Breast epithelium (tissue), 4 donors: ENCODE measurements at regions of chr11 and their contacts with region 1.

Region 1: GRCh38 chr11:65418711-65419459 is 3.7 kb upstream of the NEAT1 start:
- DNase-seq: peak; percentile 97
- H3K4me3 ChIP-seq: peak overlapping the region; percentile 93 to 96 (median 95)
- H3K27ac ChIP-seq: peak overlapping the region; percentile 100
- H3K4me1 ChIP-seq: peaks cover 26 to 30% of the 10 kb centered on the region in 2 donors
- H3K27me3 ChIP-seq: no peaks in the 10 kb centered on the region
- CTCF ChIP-seq: no peak
- POLR2A ChIP-seq: no peak

Region 2: GRCh38 chr11:65382033-65382807 is 36.7 kb before region 1 on chr11 and contains the start of gene SLC25A45:
- intact Hi-C with region 1: loop called (anchors 5 kb)
- DNase-seq: peak; percentile 92 to 95
- H3K4me3 ChIP-seq: peak within 1 kb of the TSS; percentile 42 to 68 (median 53)
- H3K27ac ChIP-seq: peak within 1 kb of the TSS; percentile 98 to 99
- H3K4me1 ChIP-seq: peaks cover 0 to 20% of the 10 kb centered on the region in 2 donors
- H3K27me3 ChIP-seq: no peaks in the 10 kb centered on the region
- CTCF ChIP-seq: peak; percentile 93 to 97 (median 95)
- POLR2A ChIP-seq: peak; percentile 22
- total RNA-seq, gene SLC25A45: 5.4 to 9.1 (median 6.6) TPM

Region 3: GRCh38 chr11:65477149-65477965 is 58.5 kb after region 1 on chr11:
- intact Hi-C with region 1: loop called (anchors 1 kb)
- DNase-seq: peak; percentile 97 to 98
- H3K4me3 ChIP-seq: peak overlapping the region; percentile 58 to 81 (median 80)
- H3K27ac ChIP-seq: peak overlapping the region; percentile 99 to 100
- H3K4me1 ChIP-seq: peaks cover 5 to 6% of the 10 kb centered on the region in 2 donors
- H3K27me3 ChIP-seq: no peaks in the 10 kb centered on the region
- CTCF ChIP-seq: peak in 1 of 3 donors; percentile 23
- POLR2A ChIP-seq: peak; percentile 84

Region 4: DNA sequence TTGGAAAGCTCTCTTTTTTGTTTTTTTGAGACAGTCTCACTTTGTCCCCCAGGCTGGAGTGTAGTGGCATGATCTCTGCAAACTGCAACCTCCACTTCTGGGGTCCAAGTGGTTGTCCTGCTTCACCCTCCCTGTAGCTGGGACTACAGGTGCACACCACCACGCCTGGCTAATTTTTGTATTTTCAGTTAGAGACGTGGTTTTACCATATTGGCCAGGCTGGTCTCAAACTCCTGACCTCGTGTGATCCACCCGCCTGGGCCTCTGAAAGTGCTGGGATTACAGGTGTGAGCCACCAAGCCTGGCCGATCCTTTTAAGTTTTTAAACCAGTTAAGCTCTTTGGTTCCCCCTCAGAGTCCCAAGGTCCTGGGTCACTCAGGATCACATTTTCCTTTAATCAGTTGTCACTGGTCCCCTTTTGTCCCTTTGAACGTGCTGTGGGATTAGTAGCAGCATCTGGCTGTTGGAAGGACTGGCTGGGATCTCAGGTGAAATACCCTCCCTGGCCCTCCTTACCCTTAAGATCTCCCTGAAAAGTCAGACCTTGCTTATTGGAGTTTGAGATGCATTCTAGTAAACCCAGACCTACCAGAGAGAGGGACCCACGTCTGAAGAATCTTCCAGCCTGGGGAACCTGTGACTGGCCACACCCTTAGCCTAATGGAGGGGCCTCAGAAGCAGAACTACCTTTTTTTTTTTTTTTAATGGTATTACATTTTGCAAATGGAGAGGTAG is 88.1 kb after region 1 on chr11:
- intact Hi-C with region 1: loop called (anchors 1 kb)
- DNase-seq: peak in 1 of 2 donors; percentile 62
- H3K4me3 ChIP-seq: peak overlapping the region; percentile 20 to 91 (median 72)
- H3K27ac ChIP-seq: peak overlapping the region; percentile 84 to 98
- H3K4me1 ChIP-seq: peaks cover 8 to 10% of the 10 kb centered on the region in 2 donors
- H3K27me3 ChIP-seq: no peaks in the 10 kb centered on the region
- CTCF ChIP-seq: no peak
- POLR2A ChIP-seq: peak; percentile 8